ENCODE measurements at regions of chr19 and their contacts with region 1.

Region 1: DNA sequence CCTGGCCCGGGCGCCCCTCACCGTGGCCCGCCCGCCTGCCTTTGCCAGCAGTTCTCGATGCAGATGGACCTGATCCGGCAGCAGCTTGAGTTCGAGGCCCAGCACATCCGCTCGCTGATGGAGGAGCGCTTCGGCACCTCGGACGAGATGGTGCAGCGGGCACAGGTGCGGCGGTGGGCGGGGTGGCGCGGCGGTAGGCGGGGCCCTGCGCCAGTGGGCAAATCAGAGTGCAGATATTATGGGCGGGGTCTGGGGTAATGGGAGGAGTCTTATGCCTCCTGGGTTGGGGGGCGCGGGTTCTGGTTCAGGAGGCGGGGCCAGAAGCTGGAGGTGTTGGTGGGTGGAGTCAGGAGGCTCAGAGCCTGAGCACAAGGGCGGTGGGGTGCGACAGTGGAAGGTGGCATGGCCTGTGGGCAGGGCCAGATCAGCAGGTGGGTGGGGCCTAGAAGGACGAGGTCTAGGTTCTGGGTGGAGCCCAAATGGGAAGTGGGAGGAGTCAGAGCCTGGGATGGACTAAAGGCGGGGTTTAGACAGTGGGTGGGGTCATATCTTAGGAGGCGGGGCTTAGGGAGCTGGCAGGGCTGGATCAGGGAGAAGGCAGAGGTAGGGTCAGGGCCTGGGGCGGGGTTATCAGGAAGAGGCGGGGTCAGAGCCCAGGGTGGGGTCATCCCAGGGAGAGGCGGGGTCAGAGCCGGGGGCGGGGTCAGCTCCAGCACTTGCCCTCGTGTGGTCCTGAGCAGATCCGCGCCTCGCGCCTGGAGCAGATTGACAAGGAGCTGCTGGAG is 5.6 kb downstream of the APC2 start:
- DNase-seq: peak; percentile 53
- H3K4me3 ChIP-seq: no peak overlapping the region
- H3K27ac ChIP-seq: no peak overlapping the region
- H3K4me1 ChIP-seq: no peaks in the 10 kb centered on the region
- H3K27me3 ChIP-seq: peaks cover 28 to 31% of the 10 kb centered on the region in 2 experiments
- CTCF ChIP-seq: no peak
- POLR2A ChIP-seq: no peak

Region 2: DNA sequence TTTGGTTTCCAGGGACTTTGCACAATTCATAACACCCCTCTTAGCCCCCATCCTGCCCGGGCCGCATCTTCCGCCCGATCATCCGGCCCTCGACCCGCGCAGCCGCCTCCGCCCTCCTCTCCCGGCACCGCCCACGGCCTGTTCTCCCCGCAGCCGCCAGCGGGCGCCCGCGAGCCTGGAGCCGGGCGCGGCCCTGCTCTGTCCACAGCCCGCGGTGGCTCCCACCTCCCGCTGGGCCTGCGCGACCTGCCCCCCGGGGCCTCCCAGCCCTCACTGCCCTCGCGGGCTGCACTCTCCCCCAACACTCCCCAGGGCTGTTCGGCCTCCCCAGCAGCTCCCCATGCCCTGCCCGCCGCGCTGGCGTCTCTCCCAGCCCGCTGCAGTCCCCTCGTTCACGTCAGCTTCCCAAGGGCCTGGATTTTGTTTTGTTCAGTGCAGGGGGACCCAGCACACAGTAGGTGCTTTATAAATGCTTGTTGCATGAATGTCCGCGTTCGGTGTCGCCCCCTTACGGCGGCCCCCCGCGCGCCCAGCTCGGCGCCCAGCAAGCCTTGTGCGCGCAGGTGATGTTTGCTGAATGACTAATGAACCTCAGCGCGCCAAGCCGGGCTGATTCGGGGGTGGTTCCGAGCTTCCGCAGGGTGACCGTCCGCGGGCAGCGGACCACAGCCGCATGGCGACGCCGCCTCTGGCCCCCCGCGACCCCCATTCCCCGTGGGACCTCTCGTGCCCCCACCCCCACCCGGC is 10.2 kb before region 1 on chr19:
- CTCF ChIA-PET with region 1: interaction called, 28 read pairs
- POLR2A ChIA-PET with region 1: no interaction called
- dilution Hi-C with region 1: no loop called
- intact Hi-C with region 1: no loop called
- DNase-seq: peak; percentile 52
- H3K4me3 ChIP-seq: peak overlapping the region in 1 of 3 experiments; percentile 14
- H3K27ac ChIP-seq: no peak overlapping the region
- H3K4me1 ChIP-seq: no peaks in the 10 kb centered on the region
- H3K27me3 ChIP-seq: peaks cover 14 to 33% of the 10 kb centered on the region in 2 experiments
- CTCF ChIP-seq: peak; percentile 81 to 96
- POLR2A ChIP-seq: no peak

Region 3: GRCh38 chr19:1540365-1540925 is 84.9 kb after region 1 on chr19:
- CTCF ChIA-PET with region 1: no interaction called
- POLR2A ChIA-PET with region 1: no interaction called
- dilution Hi-C with region 1: no loop called
- intact Hi-C with region 1: no loop called
- DNase-seq: no peak
- H3K4me3 ChIP-seq: no peak overlapping the region
- H3K27ac ChIP-seq: no peak overlapping the region
- H3K4me1 ChIP-seq: no peaks in the 10 kb centered on the region
- H3K27me3 ChIP-seq: no peaks in the 10 kb centered on the region
- CTCF ChIP-seq: no peak
- POLR2A ChIP-seq: no peak